H1 (cell line): ENCODE measurements at regions of chr2 and their contacts with region 1.

Region 1: DNA sequence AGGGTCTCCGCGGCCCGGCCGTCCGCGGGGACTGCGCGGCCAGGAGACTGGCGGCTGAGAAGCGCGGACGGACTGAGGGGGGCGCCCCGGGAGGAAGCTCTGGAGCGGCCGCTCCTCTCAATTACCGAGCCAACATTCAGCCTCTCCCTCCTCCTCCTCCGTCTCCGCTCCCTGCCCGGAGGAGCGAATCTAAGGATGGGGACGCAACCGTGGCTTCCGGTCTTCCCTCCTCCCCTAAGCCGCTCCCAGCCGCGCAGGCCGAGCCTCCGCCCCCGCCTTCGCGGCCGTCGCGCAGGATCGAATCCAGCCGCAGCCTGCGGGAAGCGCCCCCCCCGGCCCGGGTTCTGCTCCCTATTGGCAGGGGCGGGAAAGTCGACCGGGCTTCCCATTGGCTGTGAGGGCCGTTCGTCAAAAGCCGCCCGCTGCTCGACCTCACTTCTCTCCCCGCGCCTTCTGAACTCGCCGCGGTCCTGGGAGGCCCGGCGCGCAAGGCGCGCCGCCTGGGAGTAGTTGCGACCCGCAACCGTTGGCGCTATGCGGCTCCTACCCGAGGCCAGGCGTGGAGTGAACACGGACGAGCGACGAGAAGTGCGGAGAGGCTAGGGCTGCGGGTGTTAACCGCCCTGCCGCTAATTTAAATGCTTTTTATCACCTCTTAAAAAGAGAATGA is at the start of gene HNRNPLL:
- DNase-seq: peak; percentile 92 to 99
- H3K4me3 ChIP-seq: peak within 1 kb of the TSS; percentile 80 to 94 (median 84)
- H3K27ac ChIP-seq: peak within 1 kb of the TSS; percentile 91
- H3K4me1 ChIP-seq: peaks cover 0 to 9% (median 3%) of the 10 kb centered on the region in 4 experiments; a peak in 3 of 7 replicates
- H3K27me3 ChIP-seq: no peaks in the 10 kb centered on the region
- CTCF ChIP-seq: peak in 1 of 3 experiments; percentile 1; a peak in 1 of 4 replicates
- EP300 ChIP-seq: no peak
- POLR2A ChIP-seq: peak; percentile 88 to 93
- RAD21 ChIP-seq: no peak
- total RNA-seq, gene HNRNPLL: 69.3 TPM in 2 replicates

Region 2: DNA sequence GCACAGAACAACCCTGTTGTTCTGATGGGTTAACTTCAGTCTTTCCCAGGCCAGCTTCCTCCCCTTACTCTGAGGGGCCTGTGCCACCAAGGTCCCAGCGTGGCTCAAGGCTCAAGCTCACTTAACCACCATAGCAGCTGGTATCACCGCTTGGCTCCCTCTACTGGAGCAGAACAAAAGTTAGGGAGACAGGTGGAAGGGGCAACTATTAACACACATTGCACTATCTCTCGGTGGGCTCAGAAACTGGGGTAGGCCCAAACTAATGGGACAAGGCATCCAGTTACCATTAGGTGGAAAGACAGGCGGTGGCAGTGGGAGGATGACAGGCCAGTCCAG is 137.1 kb before region 1 on chr2:
- CTCF ChIA-PET with region 1: no interaction called
- POLR2A ChIA-PET with region 1: no interaction called
- DNase-seq: peak; percentile 33 to 56
- H3K4me3 ChIP-seq: no peak overlapping the region
- H3K27ac ChIP-seq: no peak overlapping the region
- H3K4me1 ChIP-seq: no peaks in the 10 kb centered on the region
- H3K27me3 ChIP-seq: no peaks in the 10 kb centered on the region
- CTCF ChIP-seq: peak; percentile 48 to 91 (median 80)
- EP300 ChIP-seq: no peak
- POLR2A ChIP-seq: no peak
- RAD21 ChIP-seq: peak; percentile 79 to 88

Region 3: GRCh38 chr2:38581193-38582147 is 21.4 kb before region 1 on chr2:
- CTCF ChIA-PET with region 1: interaction called, 119 read pairs
- POLR2A ChIA-PET with region 1: interaction called, 9 read pairs
- DNase-seq: no peak
- H3K4me3 ChIP-seq: no peak overlapping the region
- H3K27ac ChIP-seq: no peak overlapping the region
- H3K4me1 ChIP-seq: peaks cover 0 to 13% (median 2%) of the 10 kb centered on the region in 4 experiments; a peak in 4 of 7 replicates
- H3K27me3 ChIP-seq: no peaks in the 10 kb centered on the region
- CTCF ChIP-seq: peak in 2 of 3 experiments; percentile 57 to 68; a peak in 3 of 4 replicates
- EP300 ChIP-seq: no peak
- POLR2A ChIP-seq: peak in 1 of 2 experiments; percentile 4; a peak in 1 of 3 replicates
- RAD21 ChIP-seq: peak; percentile 75 to 78

Region 4: DNA sequence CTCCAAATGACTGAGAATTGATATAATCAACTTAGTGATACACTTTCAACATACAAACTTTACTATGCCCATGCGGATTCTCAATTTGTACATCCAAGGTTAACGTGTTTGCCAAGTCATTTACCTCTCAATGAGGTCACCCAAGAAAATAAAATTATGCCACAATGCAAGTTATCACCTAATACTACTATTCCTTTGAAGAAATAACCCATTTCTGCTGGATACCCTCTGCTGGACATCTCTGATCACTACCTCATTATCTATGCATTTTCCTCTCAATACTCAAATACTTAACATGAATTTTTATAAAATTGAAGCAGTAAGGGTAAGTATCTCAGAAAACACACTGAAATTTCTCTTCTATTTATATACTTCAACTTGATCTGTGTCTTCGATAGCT is 12.8 kb before region 1 on chr2:
- CTCF ChIA-PET with region 1: interaction called, 119 read pairs
- POLR2A ChIA-PET with region 1: interaction called, 12 read pairs
- DNase-seq: no peak
- H3K4me3 ChIP-seq: no peak overlapping the region
- H3K27ac ChIP-seq: no peak overlapping the region
- H3K4me1 ChIP-seq: peaks cover 0 to 3% (median 0%) of the 10 kb centered on the region in 4 experiments; a peak in 2 of 7 replicates
- H3K27me3 ChIP-seq: no peaks in the 10 kb centered on the region
- CTCF ChIP-seq: no peak
- EP300 ChIP-seq: no peak
- POLR2A ChIP-seq: no peak
- RAD21 ChIP-seq: no peak

Region 5: DNA sequence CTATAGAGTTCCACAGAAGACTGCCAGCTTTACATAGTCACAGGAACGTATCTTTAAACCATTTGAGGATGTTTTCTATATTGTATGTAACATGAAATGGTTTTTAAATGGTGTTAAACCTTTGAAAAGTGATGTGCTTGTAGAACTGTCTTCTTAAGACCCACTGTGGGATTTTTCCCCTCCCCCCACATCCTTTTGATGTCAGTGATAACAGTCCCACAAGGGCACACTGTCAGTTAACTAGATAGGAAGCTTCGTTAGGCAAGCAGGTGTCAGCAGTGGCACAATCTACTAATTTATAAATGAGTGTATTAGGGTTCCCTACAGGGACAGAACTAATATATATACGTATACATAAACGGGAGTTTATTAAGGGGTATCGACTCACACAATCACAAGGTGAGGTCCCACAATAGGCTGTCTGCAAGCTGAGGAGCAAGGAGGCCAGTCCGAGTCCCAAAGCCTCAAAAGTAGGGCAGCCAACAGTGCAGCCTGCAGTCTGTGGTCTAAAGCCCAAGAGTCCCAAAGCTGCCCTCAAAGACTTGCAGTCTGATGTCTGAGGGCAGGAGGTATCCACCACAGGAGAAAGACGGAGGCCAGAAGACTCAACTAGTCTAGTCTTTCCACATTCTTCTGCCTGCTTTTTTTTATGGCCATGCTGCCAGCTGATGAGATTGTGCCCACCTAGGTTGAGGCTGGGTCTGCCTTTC is 23.6 kb after region 1 on chr2:
- CTCF ChIA-PET with region 1: interaction called, 11 read pairs
- POLR2A ChIA-PET with region 1: interaction called, 3 read pairs
- DNase-seq: no peak
- H3K4me3 ChIP-seq: no peak overlapping the region
- H3K27ac ChIP-seq: no peak overlapping the region
- H3K4me1 ChIP-seq: no peaks in the 10 kb centered on the region
- H3K27me3 ChIP-seq: no peaks in the 10 kb centered on the region
- CTCF ChIP-seq: no peak
- EP300 ChIP-seq: no peak
- POLR2A ChIP-seq: no peak
- RAD21 ChIP-seq: no peak

Region 6: GRCh38 chr2:38665854-38666555 is 63.1 kb after region 1 on chr2 and contains the start of gene GALM:
- CTCF ChIA-PET with region 1: interaction called, 5 read pairs
- POLR2A ChIA-PET with region 1: interaction called, 13 read pairs
- DNase-seq: peak; percentile 80 to 81
- H3K4me3 ChIP-seq: peak within 1 kb of the TSS; percentile 44 to 85 (median 76)
- H3K27ac ChIP-seq: peak within 1 kb of the TSS; percentile 6; the same call in 1 of the 2 replicates
- H3K4me1 ChIP-seq: peaks cover 0 to 7% (median 2%) of the 10 kb centered on the region in 4 experiments; a peak in 4 of 7 replicates
- H3K27me3 ChIP-seq: no peaks in the 10 kb centered on the region
- CTCF ChIP-seq: no peak
- EP300 ChIP-seq: no peak
- POLR2A ChIP-seq: peak in 1 of 2 experiments; percentile 66; a peak in 2 of 3 replicates
- RAD21 ChIP-seq: no peak
- total RNA-seq, gene GALM: 12.0 and 13.1 TPM in 2 replicates

Region 7: GRCh38 chr2:38672445-38673391 is 69.9 kb after region 1 on chr2:
- CTCF ChIA-PET with region 1: interaction called, 5 read pairs
- POLR2A ChIA-PET with region 1: interaction called, 10 read pairs
- DNase-seq: no peak
- H3K4me3 ChIP-seq: no peak overlapping the region
- H3K27ac ChIP-seq: no peak overlapping the region
- H3K4me1 ChIP-seq: peaks cover 0 to 4% (median 0%) of the 10 kb centered on the region in 4 experiments; a peak in 2 of 7 replicates
- H3K27me3 ChIP-seq: no peaks in the 10 kb centered on the region
- CTCF ChIP-seq: no peak
- EP300 ChIP-seq: no peak
- POLR2A ChIP-seq: no peak
- RAD21 ChIP-seq: no peak

Region 8: DNA sequence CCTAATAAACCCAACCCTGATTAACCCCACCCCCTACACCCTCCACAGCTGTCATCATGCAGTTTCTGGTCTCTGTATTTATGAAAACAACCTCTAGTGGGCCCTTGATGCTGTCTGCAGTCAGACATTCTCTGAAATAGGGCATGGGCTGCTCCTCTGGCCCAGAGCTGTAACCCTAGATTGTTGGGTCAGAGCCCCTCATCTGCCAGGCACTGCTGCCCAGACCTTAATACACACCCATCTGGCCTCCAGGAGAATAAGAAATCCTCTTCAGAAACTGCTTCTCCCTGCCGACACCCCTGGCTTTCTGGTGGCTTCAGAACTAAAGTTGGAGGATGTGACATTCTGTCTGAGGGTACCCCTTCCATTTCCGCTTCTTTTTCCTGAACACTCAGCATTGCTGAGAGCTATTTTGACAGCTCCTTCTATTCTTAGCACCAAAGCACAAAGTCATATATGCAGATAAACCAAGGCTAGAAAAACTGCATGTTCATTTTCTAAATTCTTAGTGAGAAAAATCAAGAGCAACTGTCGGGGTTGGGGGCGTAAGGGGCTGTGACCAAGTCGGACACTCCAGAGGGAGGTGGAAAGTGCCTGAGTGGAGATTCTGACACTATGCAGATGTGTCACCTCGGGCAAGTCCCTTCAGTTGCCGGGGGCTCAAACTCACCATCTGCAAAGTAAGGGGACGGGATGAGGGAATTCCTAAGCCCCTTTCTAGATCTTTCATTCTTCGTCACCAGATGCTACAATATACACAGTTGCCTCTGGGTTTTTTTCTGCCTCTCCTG is 119.6 kb after region 1 on chr2:
- CTCF ChIA-PET with region 1: interaction called, 20 read pairs
- POLR2A ChIA-PET with region 1: interaction called, 4 read pairs
- DNase-seq: no peak
- H3K4me3 ChIP-seq: no peak overlapping the region
- H3K27ac ChIP-seq: no peak overlapping the region
- H3K4me1 ChIP-seq: no peaks in the 10 kb centered on the region
- H3K27me3 ChIP-seq: no peaks in the 10 kb centered on the region
- CTCF ChIP-seq: no peak
- EP300 ChIP-seq: no peak
- POLR2A ChIP-seq: no peak
- RAD21 ChIP-seq: no peak

Region 9: DNA sequence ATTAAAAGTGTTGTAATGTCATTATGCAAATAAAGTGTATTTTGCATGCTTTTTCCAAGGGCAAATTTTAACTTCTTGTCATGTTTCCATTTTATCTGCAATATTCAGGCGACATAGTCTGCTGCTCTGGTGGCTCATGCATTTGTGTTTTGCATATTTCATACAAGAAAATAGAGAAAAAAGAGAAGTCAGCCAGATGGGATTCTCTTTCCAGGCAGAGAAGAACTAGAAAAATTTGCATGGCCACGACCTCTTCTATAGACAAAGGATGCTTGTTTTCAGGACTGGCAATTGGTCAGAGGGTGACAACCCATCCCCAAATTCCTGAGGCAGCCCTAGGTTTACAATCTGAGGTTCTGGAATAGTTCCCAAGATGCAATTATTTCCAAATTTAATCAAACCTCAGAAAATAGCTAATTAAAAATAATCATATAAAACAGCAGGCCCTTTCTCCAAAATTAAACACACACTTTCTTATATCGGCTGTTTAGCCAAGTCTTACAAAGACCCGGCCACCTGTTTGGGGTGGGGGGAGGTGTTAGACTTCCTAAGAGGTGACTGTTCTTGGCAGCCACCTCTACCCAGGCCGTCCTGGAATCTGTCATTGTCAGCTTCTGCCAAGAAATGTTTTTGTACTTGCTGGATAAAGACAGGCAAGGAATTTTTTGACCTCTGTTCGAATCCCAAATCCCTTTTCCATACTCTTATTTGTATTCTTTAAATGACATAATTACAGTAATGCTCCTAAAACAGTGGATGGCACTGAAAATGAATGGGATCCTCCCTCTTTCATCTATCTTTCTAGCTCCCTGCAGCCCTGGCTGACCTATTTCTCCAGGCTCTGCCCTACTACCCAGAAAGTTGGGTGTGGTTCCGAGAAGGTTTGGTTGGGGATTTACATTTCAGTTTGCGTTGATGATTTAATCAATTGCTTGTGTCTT is 538.7 kb after region 1 on chr2:
- CTCF ChIA-PET with region 1: no interaction called
- POLR2A ChIA-PET with region 1: no interaction called
- DNase-seq: no peak
- H3K4me3 ChIP-seq: no peak overlapping the region
- H3K27ac ChIP-seq: no peak overlapping the region
- H3K4me1 ChIP-seq: peaks cover 0 to 3% (median 2%) of the 10 kb centered on the region in 4 experiments; a peak in 4 of 7 replicates
- H3K27me3 ChIP-seq: no peaks in the 10 kb centered on the region
- CTCF ChIP-seq: no peak
- EP300 ChIP-seq: no peak
- POLR2A ChIP-seq: no peak
- RAD21 ChIP-seq: no peak